ENCODE measurements at regions of chr19 and their contacts with region 1.

Region 1: DNA sequence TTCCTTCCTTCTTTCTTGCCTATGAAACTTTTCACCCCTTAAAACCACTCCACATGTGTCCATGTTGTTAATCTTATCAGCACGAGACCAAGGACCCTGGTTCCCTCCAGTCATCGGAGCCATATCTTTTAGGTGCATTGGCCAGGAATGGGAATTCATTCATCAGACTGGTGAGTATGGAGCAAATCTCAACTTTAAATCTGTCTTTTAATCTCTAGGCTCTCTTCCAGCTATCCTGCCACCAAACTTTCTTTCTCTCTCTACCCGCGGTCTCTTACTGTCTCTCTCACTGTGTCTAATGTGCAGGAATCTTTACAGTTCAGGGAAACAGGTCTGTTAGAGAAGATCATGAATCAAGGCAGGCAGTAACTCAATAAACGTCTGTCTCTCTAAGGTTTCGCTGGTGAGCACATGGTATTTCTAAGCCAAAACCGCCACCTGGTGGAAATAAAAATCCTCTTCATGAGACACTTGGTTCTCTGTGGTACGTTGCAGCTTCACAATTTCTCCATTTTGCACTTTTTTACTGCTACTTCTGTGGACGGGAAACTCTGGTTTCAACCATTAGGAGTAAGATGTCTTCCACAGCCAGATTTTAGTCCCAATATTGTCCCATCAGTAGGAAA is 16.1 kb downstream of the LGALS16 start:
- DNase-seq: peak; percentile 35
- CTCF ChIP-seq: peak; percentile 54

Region 2: GRCh38 chr19:39445265-39446111 is 226.4 kb before region 1 on chr19 and contains the start of gene SUPT5H:
- CTCF ChIA-PET with region 1: interaction called, 17 read pairs
- POLR2A ChIA-PET with region 1: no interaction called
- DNase-seq: peak; percentile 98
- CTCF ChIP-seq: no peak

Region 3: GRCh38 chr19:39539519-39540332 is 132.1 kb before region 1 on chr19 and contains the start of gene EID2:
- CTCF ChIA-PET with region 1: interaction called, 25 read pairs
- POLR2A ChIA-PET with region 1: no interaction called
- DNase-seq: peak; percentile 94
- CTCF ChIP-seq: peak; percentile 81

Region 4: GRCh38 chr19:39555883-39556282 is 116.0 kb before region 1 on chr19:
- CTCF ChIA-PET with region 1: interaction called, 144 read pairs
- POLR2A ChIA-PET with region 1: no interaction called
- DNase-seq: no peak
- CTCF ChIP-seq: no peak

Region 5: GRCh38 chr19:39637891-39638290 is 34.0 kb before region 1 on chr19:
- CTCF ChIA-PET with region 1: no interaction called
- POLR2A ChIA-PET with region 1: no interaction called
- DNase-seq: no peak
- CTCF ChIP-seq: no peak

Region 6: DNA sequence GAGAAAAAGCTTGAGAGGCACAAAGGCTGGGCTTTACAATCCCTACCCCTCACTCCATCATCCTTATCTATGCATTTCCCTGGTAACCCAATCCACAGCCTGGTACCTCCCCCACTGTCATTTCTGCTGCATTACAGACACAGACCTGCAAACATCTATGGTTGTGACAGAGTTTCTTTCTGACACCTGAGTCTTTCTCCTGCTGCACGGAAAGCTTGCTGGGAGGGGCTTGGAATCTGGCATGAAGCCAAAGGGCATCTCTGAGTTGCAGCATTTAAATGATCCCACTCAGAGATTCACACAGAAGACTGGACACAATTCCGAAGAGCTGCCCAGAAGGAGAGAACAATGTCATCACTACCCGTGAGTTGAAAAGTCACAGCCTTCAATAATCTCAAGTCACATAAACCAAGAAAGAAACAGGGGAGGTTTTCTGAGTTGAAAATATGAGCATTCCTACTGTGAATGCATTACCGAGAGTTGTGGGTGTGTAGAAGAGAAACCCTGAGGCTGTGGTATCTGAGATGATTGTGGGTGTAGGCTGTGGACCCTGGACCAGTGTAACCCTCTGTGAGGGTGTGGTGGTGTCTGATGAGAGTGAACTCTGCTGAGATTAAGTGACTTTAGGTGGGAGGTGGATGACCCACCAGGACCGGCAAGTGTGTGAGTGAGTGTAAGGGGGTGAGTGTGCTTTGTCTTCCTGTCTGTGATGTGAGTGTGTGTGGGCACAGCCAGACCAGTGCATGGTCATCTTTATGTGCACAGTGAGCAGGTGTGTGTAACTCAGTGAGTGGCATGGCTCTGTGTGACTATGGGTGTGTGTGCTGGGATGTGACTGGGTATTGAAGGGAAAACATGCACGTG is 32.6 kb after region 1 on chr19 and contains the start of gene LGALS14:
- CTCF ChIA-PET with region 1: interaction called, 19 read pairs
- POLR2A ChIA-PET with region 1: no interaction called
- DNase-seq: peak; percentile 31
- CTCF ChIP-seq: no peak

Region 7: DNA sequence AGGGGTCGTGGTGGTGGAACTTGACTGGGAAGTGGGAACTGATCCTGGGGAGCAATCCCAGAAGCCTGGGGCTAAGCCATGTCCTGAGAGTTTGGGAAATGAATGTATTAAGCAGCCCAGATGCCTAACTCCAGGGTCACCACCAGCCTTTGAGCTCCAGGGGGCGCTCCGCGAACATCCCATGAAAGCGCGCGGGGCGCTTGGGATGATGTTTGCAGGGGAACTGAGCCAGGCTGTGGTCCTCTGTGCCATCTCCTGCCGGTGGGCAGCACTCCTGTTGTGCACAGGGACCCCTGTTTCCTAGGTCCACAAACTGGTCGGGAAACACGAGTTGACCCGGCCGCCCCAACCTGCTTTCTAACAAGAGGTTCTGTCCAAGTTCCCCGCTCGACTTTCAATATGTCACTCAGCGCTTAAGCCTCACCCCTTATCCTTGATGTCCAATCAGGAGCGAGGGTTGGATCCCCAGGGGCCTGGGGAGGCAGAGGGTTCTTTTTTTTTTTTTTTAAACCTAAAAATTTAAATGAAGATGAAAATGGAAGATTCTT is 121.2 kb after region 1 on chr19:
- CTCF ChIA-PET with region 1: interaction called, 37 read pairs
- POLR2A ChIA-PET with region 1: no interaction called
- DNase-seq: peak; percentile 84
- CTCF ChIP-seq: peak; percentile 87

Measured in GM10248 (cell line).